ENCODE measurements at regions of chr20 and their contacts with region 1.

Region 1: GRCh38 chr20:54345301-54345724 is 130.1 kb upstream of the DOK5 start:
- DNase-seq: no peak
- H3K4me3 ChIP-seq: no peak overlapping the region
- H3K27ac ChIP-seq: peak overlapping the region; percentile 5 to 54
- H3K4me1 ChIP-seq: peaks cover 0 to 15% of the 10 kb centered on the region in 2 donors
- H3K27me3 ChIP-seq: no peaks in the 10 kb centered on the region
- CTCF ChIP-seq: no peak

Region 2: GRCh38 chr20:53594068-53595017 is 751.0 kb before region 1 on chr20:
- intact Hi-C with region 1: loop called (anchors 10 kb)
- DNase-seq: peak; percentile 64 to 98
- H3K4me3 ChIP-seq: peak overlapping the region; percentile 92 to 98
- H3K27ac ChIP-seq: peak overlapping the region; percentile 95 to 99
- H3K4me1 ChIP-seq: peaks cover 0 to 13% of the 10 kb centered on the region in 2 donors
- H3K27me3 ChIP-seq: no peaks in the 10 kb centered on the region
- CTCF ChIP-seq: no peak